A549 (cell line): ENCODE measurements at regions of chr2 and their contacts with region 1.

Region 1: DNA sequence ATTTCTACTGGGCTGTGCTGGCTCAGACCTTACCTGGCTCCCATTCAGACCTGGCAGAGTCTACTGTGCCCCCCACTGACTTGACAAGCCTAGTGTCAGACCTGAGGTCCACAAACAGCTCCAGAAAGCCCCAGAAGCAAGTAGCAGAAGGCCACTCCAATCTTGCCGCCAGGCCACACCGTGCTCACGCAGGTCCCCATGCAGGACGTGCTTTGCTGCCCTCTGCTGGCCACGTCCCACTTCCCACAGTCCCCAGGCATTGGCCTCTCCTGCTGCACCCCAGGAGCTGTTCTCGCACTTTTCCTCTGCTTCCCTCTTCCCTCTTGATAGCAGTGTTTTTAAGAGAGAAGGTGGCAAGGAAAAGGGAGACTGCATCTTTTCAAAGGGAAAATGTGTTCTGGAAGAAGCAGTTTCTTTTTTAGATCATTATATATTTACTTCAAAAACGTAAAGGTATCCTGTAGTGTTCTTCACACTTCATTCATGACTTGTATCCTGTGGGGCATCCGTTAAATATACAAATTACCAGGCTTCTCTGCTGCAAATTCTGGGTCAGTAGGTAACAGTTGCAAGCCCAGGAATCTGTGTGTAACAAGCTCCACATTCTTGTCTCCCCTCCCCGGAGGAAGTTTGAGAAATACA is 81.4 kb upstream of the PAPOLG start:
- DNase-seq: peak; percentile 82 to 85
- ATAC-seq: peak; percentile 98 to 100
- H3K4me3 ChIP-seq: no peak overlapping the region
- H3K27ac ChIP-seq: no peak overlapping the region
- H3K4me1 ChIP-seq: no peaks in the 10 kb centered on the region
- CTCF ChIP-seq: peak; percentile 92
- EP300 ChIP-seq: no peak
- POLR2A ChIP-seq: no peak
- RAD21 ChIP-seq: peak; percentile 72 to 80

Region 2: DNA sequence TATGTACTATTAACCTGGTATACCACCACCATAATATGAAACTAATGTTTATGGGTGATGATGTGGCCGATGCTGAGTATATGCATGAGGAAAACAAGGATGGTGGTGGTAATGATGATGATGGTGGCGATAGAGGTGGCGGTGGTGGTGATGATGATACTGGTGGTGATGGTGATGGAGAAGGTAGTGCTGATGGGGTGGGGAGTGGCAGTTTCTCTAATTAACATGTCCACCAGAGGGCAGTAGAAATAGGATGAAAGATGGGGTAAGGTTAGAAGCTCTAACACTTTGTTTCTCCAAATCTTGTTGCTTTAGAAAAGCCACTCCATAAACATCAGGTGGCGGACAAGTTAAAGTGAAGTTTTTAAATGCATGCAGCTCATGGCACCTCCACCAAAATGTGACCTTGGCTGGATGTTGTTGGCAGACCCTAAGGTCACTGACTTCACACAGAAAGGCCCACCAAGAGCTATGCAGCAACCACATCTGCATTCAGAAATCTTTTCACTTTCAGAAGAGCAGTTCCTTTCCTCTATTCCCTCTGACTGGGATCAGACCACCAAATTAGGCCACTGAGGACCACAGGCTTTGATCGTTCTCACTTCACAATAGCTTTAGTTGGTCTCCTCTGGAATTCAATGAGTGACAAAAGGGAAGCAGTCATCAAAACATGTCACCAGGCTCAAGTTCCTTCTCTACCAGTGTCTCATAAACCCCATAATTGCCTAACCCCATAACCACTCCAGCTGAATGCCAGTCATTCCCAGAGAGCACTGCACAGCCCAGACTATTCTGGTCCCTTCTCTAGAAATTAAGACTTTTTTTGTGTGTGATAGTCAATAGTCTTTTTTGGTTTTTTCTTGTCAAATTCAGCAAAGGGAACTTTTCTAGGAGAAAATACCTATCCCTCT is 113.7 kb before region 1 on chr2:
- CTCF ChIA-PET with region 1: interaction called, 27 read pairs
- POLR2A ChIA-PET with region 1: no interaction called
- DNase-seq: peak in 1 of 2 experiments; percentile 31
- ATAC-seq: peak; percentile 72 to 92
- H3K4me3 ChIP-seq: no peak overlapping the region
- H3K27ac ChIP-seq: no peak overlapping the region
- H3K4me1 ChIP-seq: 0 out of 3 replicates have a peak, but pooled peaks cover 7% of the 10 kb centered on the region
- CTCF ChIP-seq: peak; percentile 64
- EP300 ChIP-seq: no peak
- POLR2A ChIP-seq: no peak
- RAD21 ChIP-seq: 0 out of 5 replicates have a peak, but pooled peaks have one; percentile 18 to 28

Region 3: GRCh38 chr2:60641811-60642788 is 32.5 kb before region 1 on chr2:
- CTCF ChIA-PET with region 1: interaction called, 14 read pairs
- POLR2A ChIA-PET with region 1: no interaction called
- DNase-seq: peak; percentile 38 to 67
- ATAC-seq: peak in 1 of 2 experiments; percentile 87; a peak in 3 of 6 replicates
- H3K4me3 ChIP-seq: no peak overlapping the region
- H3K27ac ChIP-seq: no peak overlapping the region
- H3K4me1 ChIP-seq: no peaks in the 10 kb centered on the region
- CTCF ChIP-seq: peak; percentile 78
- EP300 ChIP-seq: no peak
- POLR2A ChIP-seq: no peak
- RAD21 ChIP-seq: peak; percentile 20 to 41; a peak in 3 of 5 replicates

Region 4: GRCh38 chr2:60659026-60659425 is 15.6 kb before region 1 on chr2:
- CTCF ChIA-PET with region 1: interaction called, 84 read pairs
- POLR2A ChIA-PET with region 1: no interaction called
- DNase-seq: no peak
- ATAC-seq: peak in 1 of 2 experiments; percentile 82; a peak in 3 of 6 replicates
- H3K4me3 ChIP-seq: no peak overlapping the region
- H3K27ac ChIP-seq: no peak overlapping the region
- H3K4me1 ChIP-seq: no peaks in the 10 kb centered on the region
- CTCF ChIP-seq: no peak
- EP300 ChIP-seq: no peak
- POLR2A ChIP-seq: no peak
- RAD21 ChIP-seq: no peak

Region 5: DNA sequence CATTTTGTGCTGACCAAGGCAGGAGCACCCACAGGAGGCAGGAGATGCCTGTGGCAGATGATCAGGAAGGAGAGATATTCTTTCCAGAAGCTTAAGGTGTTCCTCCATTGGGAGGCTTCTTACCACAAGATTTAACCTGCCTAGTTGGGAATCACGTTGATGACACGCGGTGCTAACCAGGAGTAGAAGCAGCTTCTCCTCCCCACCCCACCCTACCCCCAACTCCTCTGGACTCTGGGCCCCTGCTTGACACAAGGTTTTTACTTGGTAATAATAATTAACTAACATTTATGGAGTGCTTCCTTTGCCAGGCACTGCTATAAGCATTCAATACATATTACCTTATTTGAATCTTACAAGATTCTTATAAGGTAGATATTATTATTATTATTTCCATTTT is 18.9 kb after region 1 on chr2:
- CTCF ChIA-PET with region 1: interaction called, 65 read pairs
- POLR2A ChIA-PET with region 1: no interaction called
- DNase-seq: no peak
- ATAC-seq: no peak
- H3K4me3 ChIP-seq: no peak overlapping the region
- H3K27ac ChIP-seq: no peak overlapping the region
- H3K4me1 ChIP-seq: no peaks in the 10 kb centered on the region
- CTCF ChIP-seq: no peak
- EP300 ChIP-seq: no peak
- POLR2A ChIP-seq: no peak
- RAD21 ChIP-seq: no peak